ENCODE measurements at regions of chr4 and their contacts with region 1.

Region 1: GRCh38 chr4:47032415-47033106 is 1.2 kb downstream of the GABRB1 start:
- DNase-seq: peak; percentile 63
- H3K4me3 Mint-ChIP-seq: peak overlapping the region; percentile 23
- H3K27ac Mint-ChIP-seq: no peak overlapping the region
- H3K4me1 Mint-ChIP-seq: peaks cover 15% of the 10 kb centered on the region
- H3K27me3 Mint-ChIP-seq: peaks cover 29% of the 10 kb centered on the region

Region 2: GRCh38 chr4:46844325-46844917 is 188.1 kb before region 1 on chr4:
- CTCF ChIA-PET with region 1: no interaction called
- POLR2A ChIA-PET with region 1: no interaction called
- intact Hi-C with region 1: loop called (anchors 1 kb)
- DNase-seq: peak; percentile 37
- H3K4me3 Mint-ChIP-seq: no peak overlapping the region
- H3K27ac Mint-ChIP-seq: no peak overlapping the region
- H3K4me1 Mint-ChIP-seq: no peaks in the 10 kb centered on the region
- H3K27me3 Mint-ChIP-seq: no peaks in the 10 kb centered on the region

Region 3: GRCh38 chr4:46931981-46932380 is 100.6 kb before region 1 on chr4:
- CTCF ChIA-PET with region 1: interaction called, 3 read pairs
- POLR2A ChIA-PET with region 1: no interaction called
- intact Hi-C with region 1: loop called (anchors 1 kb)
- DNase-seq: peak; percentile 25
- H3K4me3 Mint-ChIP-seq: no peak overlapping the region
- H3K27ac Mint-ChIP-seq: no peak overlapping the region
- H3K4me1 Mint-ChIP-seq: no peaks in the 10 kb centered on the region
- H3K27me3 Mint-ChIP-seq: peaks cover 3% of the 10 kb centered on the region